CD4-positive, alpha-beta memory T cell (primary cell): ENCODE measurements at regions of chr11 and their contacts with region 1.

Region 1: GRCh38 chr11:67317205-67317887 is 14.0 kb downstream of the SSH3 start:
- DNase-seq: peak; percentile 96 to 99 (median 97)
- H3K4me3 ChIP-seq: peak overlapping the region; percentile 91
- H3K4me3 Mint-ChIP-seq: peak overlapping the region; percentile 94 to 99 (median 98)
- H3K27ac ChIP-seq: peak overlapping the region; percentile 69
- H3K27ac Mint-ChIP-seq: peak overlapping the region; percentile 95 to 99 (median 98)
- H3K4me1 ChIP-seq: peaks cover 35% of the 10 kb centered on the region
- H3K4me1 Mint-ChIP-seq: peaks cover 27 to 49% (median 40%) of the 10 kb centered on the region in 4 donors
- H3K27me3 ChIP-seq: no peaks in the 10 kb centered on the region
- H3K27me3 Mint-ChIP-seq: no peaks in the 10 kb centered on the region

Region 2: GRCh38 chr11:67082035-67082791 is 235.1 kb before region 1 on chr11:
- CTCF ChIA-PET with region 1: interaction called, 4 read pairs
- POLR2A ChIA-PET with region 1: no interaction called
- intact Hi-C with region 1: loop called (anchors 1 kb)
- DNase-seq: no peak
- H3K4me3 ChIP-seq: no peak overlapping the region
- H3K4me3 Mint-ChIP-seq: peak overlapping the region in 3 of 8 donors; percentile 29 to 62 (median 40)
- H3K27ac ChIP-seq: no peak overlapping the region
- H3K27ac Mint-ChIP-seq: peak overlapping the region in 1 of 7 donors; percentile 39
- H3K4me1 ChIP-seq: peaks cover 11% of the 10 kb centered on the region
- H3K4me1 Mint-ChIP-seq: peaks cover 0 to 11% (median 3%) of the 10 kb centered on the region in 4 donors
- H3K27me3 ChIP-seq: no peaks in the 10 kb centered on the region
- H3K27me3 Mint-ChIP-seq: peaks cover 2 to 5% of the 10 kb centered on the region in 2 donors

Region 3: DNA sequence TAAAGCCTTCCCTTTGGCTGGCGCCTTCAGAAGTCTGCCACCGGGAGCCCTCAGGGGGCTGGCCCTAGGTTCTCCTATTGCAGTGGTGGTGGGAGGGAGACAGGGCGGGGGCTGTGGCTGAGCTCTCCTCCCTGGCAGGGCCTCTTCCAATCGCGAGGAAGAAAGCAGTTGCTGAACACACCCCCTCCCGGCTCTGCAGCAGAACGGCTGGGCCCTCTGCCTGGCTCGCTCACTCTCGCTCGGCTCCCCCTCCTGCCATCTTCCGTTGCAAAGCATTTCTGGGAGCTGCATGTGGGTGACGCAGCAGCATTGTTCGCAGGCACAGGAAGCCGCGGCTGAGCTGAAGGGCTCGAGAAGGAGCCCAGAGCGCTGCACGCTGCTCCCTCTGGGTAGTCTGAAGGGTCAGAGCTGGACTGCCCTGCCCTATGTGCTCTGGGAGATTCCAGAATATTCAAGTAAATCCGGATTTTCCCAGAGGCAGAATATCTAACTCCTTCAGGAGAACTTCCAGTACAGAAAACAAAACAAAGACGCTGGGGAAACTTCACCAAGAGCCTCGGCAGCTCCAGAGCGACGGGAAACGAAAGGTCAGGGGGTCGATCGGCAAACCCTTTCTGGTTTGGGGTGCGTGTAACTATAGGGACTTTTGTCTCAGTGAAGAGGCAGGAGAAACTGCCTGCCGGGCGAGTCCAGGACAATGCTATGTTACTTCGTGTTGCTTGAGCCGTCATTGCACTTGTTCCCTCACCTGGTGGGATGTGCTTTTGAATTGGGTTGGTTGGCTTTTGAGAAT is 77.4 kb before region 1 on chr11:
- CTCF ChIA-PET with region 1: interaction called, 16 read pairs
- POLR2A ChIA-PET with region 1: interaction called, 33 read pairs
- intact Hi-C with region 1: loop called (anchors 1 kb)
- DNase-seq: peak; percentile 95 to 100 (median 98)
- H3K4me3 ChIP-seq: peak overlapping the region; percentile 52 to 87
- H3K4me3 Mint-ChIP-seq: peak overlapping the region; percentile 96 to 100 (median 99)
- H3K27ac ChIP-seq: peak overlapping the region; percentile 97
- H3K27ac Mint-ChIP-seq: peak overlapping the region; percentile 96 to 100 (median 100)
- H3K4me1 ChIP-seq: peaks cover 39% of the 10 kb centered on the region
- H3K4me1 Mint-ChIP-seq: peaks cover 39 to 62% (median 48%) of the 10 kb centered on the region in 4 donors
- H3K27me3 ChIP-seq: no peaks in the 10 kb centered on the region
- H3K27me3 Mint-ChIP-seq: no peaks in the 10 kb centered on the region

Region 4: DNA sequence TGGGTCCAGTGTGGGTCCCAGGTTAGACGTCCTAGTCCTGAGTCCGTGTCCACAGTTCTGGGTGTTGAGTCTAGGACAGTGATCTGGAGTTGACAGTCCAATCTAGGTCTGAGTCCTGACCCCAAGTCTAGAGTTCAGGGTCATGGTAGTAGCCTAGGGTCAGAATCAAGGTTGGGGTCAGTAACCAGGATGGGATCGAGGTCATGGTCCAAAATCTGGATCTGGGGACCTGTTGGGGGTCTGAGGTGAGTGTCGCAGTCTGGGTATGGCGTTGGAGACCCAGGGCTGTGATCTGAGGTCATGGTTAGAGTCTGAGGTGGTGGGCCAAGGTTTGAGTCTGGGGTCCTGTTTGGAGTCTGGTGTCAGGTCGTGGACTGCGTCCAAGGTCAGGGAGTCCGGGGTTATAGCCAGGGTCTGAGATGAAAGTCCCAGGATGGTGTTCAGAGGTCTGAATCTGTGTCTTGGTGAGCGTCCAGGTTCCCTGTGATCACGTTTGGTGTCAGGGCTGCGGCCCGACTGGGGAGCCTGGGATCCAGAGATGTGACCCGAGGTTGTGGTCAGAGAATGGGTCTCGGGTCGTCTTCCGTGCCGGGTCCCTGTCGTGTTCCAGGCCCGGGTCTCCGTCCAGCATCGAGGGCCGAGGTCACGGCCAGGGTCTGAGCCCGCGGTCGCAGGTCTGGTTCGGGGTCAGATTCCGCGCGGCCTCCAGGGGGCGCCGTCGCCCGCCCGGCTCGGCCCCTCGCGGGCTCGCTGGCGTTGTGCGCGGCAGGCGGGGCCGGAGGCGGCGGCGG is 51.5 kb before region 1 on chr11:
- CTCF ChIA-PET with region 1: interaction called, 155 read pairs
- POLR2A ChIA-PET with region 1: interaction called, 358 read pairs
- intact Hi-C with region 1: loop called (anchors 1 kb)
- DNase-seq: peak; percentile 61 to 85 (median 77)
- H3K4me3 ChIP-seq: peak overlapping the region in 1 of 2 donors; percentile 23
- H3K4me3 Mint-ChIP-seq: peak overlapping the region; percentile 77 to 86 (median 80)
- H3K27ac ChIP-seq: peak overlapping the region; percentile 63
- H3K27ac Mint-ChIP-seq: peak overlapping the region; percentile 79 to 94 (median 87)
- H3K4me1 ChIP-seq: peaks cover 61% of the 10 kb centered on the region
- H3K4me1 Mint-ChIP-seq: peaks cover 34 to 82% (median 50%) of the 10 kb centered on the region in 4 donors
- H3K27me3 ChIP-seq: no peaks in the 10 kb centered on the region
- H3K27me3 Mint-ChIP-seq: peaks cover 0 to 5% of the 10 kb centered on the region in 2 donors

Region 5: GRCh38 chr11:67288452-67289225 is 28.7 kb before region 1 on chr11:
- CTCF ChIA-PET with region 1: interaction called, 25 read pairs
- POLR2A ChIA-PET with region 1: interaction called, 184 read pairs
- intact Hi-C with region 1: loop called (anchors 1 kb)
- DNase-seq: peak; percentile 89 to 94 (median 91)
- H3K4me3 ChIP-seq: peak overlapping the region; percentile 58 to 62
- H3K4me3 Mint-ChIP-seq: peak overlapping the region; percentile 79 to 90 (median 86)
- H3K27ac ChIP-seq: peak overlapping the region; percentile 88
- H3K27ac Mint-ChIP-seq: peak overlapping the region; percentile 95 to 100 (median 98)
- H3K4me1 ChIP-seq: peaks cover 77% of the 10 kb centered on the region
- H3K4me1 Mint-ChIP-seq: peaks cover 32 to 81% (median 46%) of the 10 kb centered on the region in 4 donors
- H3K27me3 ChIP-seq: no peaks in the 10 kb centered on the region
- H3K27me3 Mint-ChIP-seq: no peaks in the 10 kb centered on the region

Region 6: GRCh38 chr11:67345920-67346799 is 28.8 kb after region 1 on chr11:
- CTCF ChIA-PET with region 1: interaction called, 34 read pairs
- POLR2A ChIA-PET with region 1: interaction called, 32 read pairs
- intact Hi-C with region 1: no loop called
- DNase-seq: peak in 4 of 5 donors; percentile 30 to 41 (median 38)
- H3K4me3 ChIP-seq: no peak overlapping the region
- H3K4me3 Mint-ChIP-seq: peak overlapping the region in 3 of 8 donors; percentile 35 to 51 (median 50)
- H3K27ac ChIP-seq: no peak overlapping the region
- H3K27ac Mint-ChIP-seq: peak overlapping the region in 6 of 7 donors; percentile 50 to 92 (median 85)
- H3K4me1 ChIP-seq: peaks cover 35% of the 10 kb centered on the region
- H3K4me1 Mint-ChIP-seq: peaks cover 28 to 55% (median 36%) of the 10 kb centered on the region in 4 donors
- H3K27me3 ChIP-seq: no peaks in the 10 kb centered on the region
- H3K27me3 Mint-ChIP-seq: no peaks in the 10 kb centered on the region

Region 7: GRCh38 chr11:67382276-67383136 is 65.2 kb after region 1 on chr11:
- CTCF ChIA-PET with region 1: interaction called, 14 read pairs
- POLR2A ChIA-PET with region 1: interaction called, 8 read pairs
- intact Hi-C with region 1: loop called (anchors 2 kb)
- DNase-seq: peak; percentile 79 to 84 (median 82)
- H3K4me3 ChIP-seq: no peak overlapping the region
- H3K4me3 Mint-ChIP-seq: peak overlapping the region in 1 of 8 donors; percentile 37
- H3K27ac ChIP-seq: no peak overlapping the region
- H3K27ac Mint-ChIP-seq: peak overlapping the region in 4 of 7 donors; percentile 47 to 86 (median 68)
- H3K4me1 ChIP-seq: peaks cover 6% of the 10 kb centered on the region
- H3K4me1 Mint-ChIP-seq: peaks cover 2 to 8% (median 6%) of the 10 kb centered on the region in 4 donors
- H3K27me3 ChIP-seq: no peaks in the 10 kb centered on the region
- H3K27me3 Mint-ChIP-seq: peaks cover 0 to 1% of the 10 kb centered on the region in 2 donors